Left colon (tissue), 2 donors: ENCODE measurements at regions of chr12 and their contacts with region 1.

Region 1: GRCh38 chr12:132414634-132415326 is 75.2 kb upstream of the FBRSL1 start:
- DNase-seq: peak; percentile 77 to 85
- ATAC-seq: peak; percentile 99

Region 2: DNA sequence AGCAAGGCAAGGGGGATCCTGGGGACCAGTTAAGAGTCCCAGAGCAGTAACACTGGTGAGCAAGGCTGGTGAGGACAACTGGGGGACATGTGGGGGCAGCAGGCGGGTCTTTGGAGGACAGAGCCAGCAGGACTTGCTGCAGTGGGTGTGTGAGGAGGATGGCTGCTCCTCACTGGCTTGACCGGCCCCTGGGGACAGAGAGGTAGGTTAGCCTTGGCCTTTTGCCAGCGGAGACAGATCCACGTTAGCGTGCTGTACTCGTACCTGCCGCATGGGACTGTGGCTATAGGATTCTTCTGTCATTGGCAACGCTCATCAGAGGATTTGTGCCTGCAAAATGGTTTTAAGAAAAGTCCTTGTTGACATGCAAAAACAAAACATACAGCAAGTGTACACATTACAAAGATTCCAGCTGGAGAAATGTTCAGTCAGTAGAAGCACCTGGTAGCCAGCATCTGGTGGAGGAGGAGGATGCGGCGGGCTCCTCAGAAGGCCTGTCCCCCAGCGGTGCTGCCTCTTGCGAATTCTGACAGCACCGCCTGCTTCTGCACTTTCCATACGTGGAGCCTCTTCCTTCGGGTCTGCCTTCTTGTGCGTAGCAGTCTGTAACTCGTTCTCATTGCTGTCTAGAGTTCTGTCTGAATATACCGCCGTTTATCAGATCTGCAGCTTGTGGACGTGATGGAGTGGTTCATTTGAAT is 373.7 kb before region 1 on chr12:
- intact Hi-C with region 1: no loop called
- DNase-seq: no peak
- ATAC-seq: no peak

Region 3: GRCh38 chr12:132285991-132286681 is 128.6 kb before region 1 on chr12:
- intact Hi-C with region 1: no loop called
- DNase-seq: peak; percentile 40 to 51
- ATAC-seq: peak; percentile 49

Region 4: DNA sequence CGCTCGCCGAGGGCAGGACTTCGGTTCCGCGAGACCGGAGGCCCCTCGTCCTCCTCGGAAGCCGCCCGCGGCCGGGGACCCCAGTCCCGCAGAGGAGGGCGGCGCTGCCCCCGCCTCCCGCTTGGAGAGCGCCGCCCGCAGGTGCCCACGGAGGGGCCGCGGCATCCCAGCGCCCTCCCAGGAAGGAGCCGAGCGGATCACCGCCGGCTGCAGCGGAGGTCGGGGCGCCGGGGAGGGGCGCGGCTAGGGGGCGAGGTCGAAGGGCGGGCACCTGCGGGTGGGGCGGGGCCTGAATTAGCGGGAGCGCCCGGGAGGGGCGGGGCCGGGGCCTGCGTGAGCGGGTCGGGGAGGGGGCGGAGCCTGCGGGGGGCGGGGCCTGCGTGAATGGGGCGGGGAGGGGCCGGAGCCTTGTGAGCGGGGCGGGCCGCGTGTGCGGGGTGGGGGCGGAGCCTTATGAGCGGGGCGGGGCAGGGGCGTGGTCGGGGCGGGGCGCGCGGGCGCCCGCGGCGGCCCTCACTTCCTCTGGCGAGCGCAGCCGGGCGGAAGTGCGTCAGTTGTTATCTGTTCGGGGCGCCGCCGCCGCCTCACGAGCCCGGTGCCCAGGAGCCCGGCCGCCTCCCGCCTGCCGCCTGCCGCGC is 74.9 kb after region 1 on chr12 and contains the start of gene FBRSL1:
- intact Hi-C with region 1: no loop called
- DNase-seq: peak; percentile 89 to 97
- ATAC-seq: peak; percentile 75
- total RNA-seq, gene FBRSL1: 63.1 to 82.6 TPM

Region 5: DNA sequence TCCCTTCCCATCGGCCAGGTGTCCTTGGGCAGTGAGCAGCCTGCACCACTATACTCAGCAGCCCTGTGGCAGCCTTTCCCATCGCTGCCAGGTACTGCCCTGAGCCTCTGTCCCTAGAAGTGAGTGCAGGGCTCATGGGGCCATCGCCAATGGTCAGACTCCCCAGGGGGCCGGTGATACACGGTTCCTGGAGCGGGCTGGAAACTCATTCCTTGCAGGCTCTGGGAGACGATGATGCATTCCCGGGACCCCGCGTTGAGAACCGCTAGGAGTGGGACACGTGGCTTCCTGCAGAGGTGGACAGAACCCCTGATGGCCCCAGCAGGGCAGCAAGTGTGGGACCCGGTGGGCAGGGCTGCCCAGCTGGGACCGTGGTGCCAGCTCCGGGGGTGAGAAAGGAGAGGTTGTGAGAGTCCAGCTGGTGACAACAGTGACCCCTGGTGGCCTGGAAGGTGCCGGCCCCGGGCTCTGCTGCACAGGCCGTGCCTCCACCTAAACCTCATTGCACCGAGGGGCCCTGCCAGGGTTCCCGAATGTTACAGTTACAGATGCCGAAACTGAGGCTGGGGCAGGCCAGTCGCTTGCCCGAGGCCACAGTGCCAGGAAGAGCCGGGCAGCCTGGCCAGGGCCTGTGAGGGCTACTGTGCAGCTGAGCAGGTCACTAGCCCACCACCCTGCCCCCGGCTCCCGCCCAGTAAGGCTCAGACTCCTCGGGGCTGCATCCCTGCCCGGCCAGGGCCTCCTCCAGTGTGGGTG is 109.0 kb after region 1 on chr12:
- intact Hi-C with region 1: loop called (anchors 5 to 10 kb)
- DNase-seq: peak; percentile 54 to 85
- ATAC-seq: peak; percentile 68

Region 6: GRCh38 chr12:132614861-132615578 is 200.2 kb after region 1 on chr12:
- intact Hi-C with region 1: loop called (anchors 5 to 10 kb)
- DNase-seq: peak; percentile 65 to 84
- ATAC-seq: peak; percentile 86

Region 7: DNA sequence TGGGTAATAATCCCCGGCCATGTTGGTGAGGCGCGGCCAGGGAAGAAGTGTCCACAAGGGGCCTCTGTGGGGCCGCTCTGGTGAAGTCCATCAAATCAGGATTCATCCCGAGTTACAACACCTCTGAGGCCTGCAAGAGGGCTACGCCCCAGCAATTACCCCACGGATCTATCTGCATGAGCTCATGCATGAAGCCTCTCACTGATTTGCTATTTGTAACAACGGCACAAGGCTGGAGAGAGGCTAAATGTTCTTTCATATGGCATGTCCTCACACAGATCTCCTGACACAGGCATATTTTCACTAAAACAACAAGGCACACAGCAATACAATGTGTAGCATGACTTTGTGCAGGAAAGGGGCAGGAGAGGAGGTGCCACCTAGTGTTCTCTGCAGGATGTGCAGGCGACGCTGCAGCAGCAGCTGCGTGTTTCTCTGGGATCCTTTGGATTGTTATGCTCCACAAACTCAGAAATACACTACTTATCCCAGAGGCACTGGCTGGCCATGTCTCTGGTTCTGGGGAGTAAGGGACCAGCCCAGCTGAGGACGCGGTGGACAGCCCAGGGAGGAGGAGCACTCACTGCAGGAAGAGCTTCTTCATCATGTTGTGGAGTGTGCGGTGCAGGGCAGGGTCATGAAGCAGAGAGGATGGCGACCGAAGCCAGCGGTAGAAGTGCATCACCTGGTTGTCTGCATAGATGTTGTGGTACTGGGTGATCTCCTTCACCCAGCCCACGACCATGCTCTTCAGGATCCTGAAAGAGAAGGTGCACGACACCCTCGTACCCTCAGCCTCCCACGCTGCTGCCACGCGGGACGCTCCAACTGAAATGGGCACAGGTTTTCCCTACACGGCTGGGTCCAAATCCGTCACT is 224.0 kb after region 1 on chr12:
- intact Hi-C with region 1: no loop called
- DNase-seq: peak in 1 of 2 donors; percentile 39
- ATAC-seq: peak; percentile 78